Activated CD4-positive, alpha-beta T cell treated with anti-CD3 and anti-CD28 coated beads, Interleukin-2, amount 10 ng/mL, durations not matched to agents 24 days and 14 days (primary cell): ENCODE measurements at regions of chr22 and their contacts with region 1.

Region 1: DNA sequence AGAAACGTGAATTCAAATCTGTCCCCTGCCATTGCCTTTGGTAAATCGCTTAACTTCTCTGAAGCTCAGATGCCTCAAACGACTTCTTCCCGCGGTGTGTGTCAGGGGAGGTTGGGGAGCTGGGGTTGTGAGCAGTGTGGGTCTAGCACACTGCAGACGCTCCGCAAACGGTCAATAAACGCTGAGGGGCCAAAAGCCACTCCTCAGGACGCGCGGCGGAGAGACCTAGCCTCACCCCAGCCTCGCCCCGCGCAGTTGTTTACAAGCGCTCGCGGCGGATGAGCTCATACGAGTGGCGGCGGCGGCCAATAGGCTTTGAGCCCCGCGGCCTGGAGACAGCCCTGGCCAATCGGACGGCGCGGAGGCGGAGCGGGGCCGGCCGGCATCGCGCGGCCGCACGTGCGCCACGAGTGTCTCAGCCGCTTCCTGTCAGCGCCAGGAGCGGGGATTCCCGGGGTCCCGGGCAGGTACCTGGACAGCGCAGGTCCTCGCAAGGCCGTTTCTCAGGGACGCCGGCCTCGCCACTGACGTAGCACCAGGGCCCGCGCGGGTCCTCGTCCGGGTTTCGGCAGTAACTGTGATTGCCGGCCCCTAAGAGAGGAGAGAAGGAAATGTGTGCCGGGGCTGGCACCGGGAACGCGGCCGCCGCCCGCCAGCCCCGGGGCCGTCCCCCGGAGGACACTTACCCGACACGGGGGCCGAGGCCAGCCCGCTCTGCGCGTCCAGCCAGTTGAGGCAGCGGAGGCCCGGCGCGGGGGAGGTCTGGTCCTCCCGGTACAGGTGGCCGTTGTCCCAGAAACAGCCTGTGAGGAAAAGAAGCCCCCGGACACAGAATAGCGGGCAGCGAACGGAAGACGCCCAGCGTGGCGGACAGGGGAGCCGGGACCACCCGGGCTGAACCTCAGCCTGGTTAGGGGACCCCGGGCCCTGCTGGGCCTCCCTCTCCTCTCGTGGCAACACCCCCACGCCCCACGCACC is 1.5 kb downstream of the PIK3IP1 start:
- DNase-seq: peak; percentile 99
- H3K4me3 Mint-ChIP-seq: peak overlapping the region; percentile 99
- H3K27ac Mint-ChIP-seq: peak overlapping the region; percentile 100
- H3K4me1 Mint-ChIP-seq: peaks cover 64% of the 10 kb centered on the region
- H3K27me3 Mint-ChIP-seq: no peaks in the 10 kb centered on the region

Region 2: DNA sequence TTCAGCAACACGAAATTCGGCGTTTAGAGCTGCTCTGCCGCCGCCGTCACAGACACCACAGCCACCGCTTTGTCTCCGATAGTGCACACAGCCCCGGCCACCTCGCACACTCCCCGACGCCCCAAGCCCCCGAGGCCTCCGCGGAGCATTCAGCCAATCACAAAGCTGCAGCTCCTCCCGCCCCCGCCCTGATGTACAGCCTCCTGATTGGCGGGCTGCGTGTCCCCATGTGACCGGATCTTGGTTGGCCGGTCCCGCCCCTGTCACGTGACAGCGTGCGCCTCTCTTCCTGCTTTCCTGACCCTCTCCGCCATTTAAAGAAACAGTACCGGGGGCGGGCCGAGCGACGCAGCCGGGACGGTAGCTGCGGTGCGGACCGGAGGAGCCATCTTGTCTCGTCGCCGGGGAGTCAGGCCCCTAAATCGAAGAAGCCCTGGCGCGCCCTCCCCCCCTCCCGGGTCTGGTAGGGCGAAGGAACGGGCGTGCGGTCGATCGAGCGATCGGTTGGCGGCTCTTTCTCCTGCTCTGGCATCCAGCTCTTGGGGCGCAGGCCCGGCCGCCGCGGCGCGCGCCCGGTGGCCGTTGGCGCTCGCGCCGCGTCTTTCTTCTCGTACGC is 321.8 kb before region 1 on chr22 and contains the start of gene TUG1:
- intact Hi-C with region 1: loop called (anchors 5 kb)
- DNase-seq: peak; percentile 99
- H3K4me3 Mint-ChIP-seq: peak within 1 kb of the TSS; percentile 98
- H3K27ac Mint-ChIP-seq: peak within 1 kb of the TSS; percentile 99
- H3K4me1 Mint-ChIP-seq: peaks cover 39% of the 10 kb centered on the region
- H3K27me3 Mint-ChIP-seq: peaks cover 4% of the 10 kb centered on the region
- total RNA-seq, gene TUG1: 68.1 and 69.1 TPM in 2 replicates

Region 3: GRCh38 chr22:31211862-31212730 is 78.7 kb before region 1 on chr22 and contains the start of gene LIMK2:
- intact Hi-C with region 1: loop called (anchors 1 kb)
- DNase-seq: peak; percentile 99
- H3K4me3 Mint-ChIP-seq: peak within 1 kb of the TSS; percentile 88
- H3K27ac Mint-ChIP-seq: peak within 1 kb of the TSS; percentile 86
- H3K4me1 Mint-ChIP-seq: peaks cover 43% of the 10 kb centered on the region
- H3K27me3 Mint-ChIP-seq: no peaks in the 10 kb centered on the region
- total RNA-seq, gene LIMK2: 34.2 and 35.9 TPM in 2 replicates

Region 4: GRCh38 chr22:31313366-31314147 is 22.8 kb after region 1 on chr22:
- intact Hi-C with region 1: loop called (anchors 1 kb)
- DNase-seq: peak; percentile 89
- H3K4me3 Mint-ChIP-seq: no peak overlapping the region
- H3K27ac Mint-ChIP-seq: no peak overlapping the region
- H3K4me1 Mint-ChIP-seq: peaks cover 7% of the 10 kb centered on the region
- H3K27me3 Mint-ChIP-seq: no peaks in the 10 kb centered on the region

Region 5: GRCh38 chr22:31323578-31324550 is 33.1 kb after region 1 on chr22:
- intact Hi-C with region 1: no loop called
- DNase-seq: no peak
- H3K4me3 Mint-ChIP-seq: no peak overlapping the region
- H3K27ac Mint-ChIP-seq: peak overlapping the region; percentile 13
- H3K4me1 Mint-ChIP-seq: peaks cover 2% of the 10 kb centered on the region
- H3K27me3 Mint-ChIP-seq: no peaks in the 10 kb centered on the region

Region 6: DNA sequence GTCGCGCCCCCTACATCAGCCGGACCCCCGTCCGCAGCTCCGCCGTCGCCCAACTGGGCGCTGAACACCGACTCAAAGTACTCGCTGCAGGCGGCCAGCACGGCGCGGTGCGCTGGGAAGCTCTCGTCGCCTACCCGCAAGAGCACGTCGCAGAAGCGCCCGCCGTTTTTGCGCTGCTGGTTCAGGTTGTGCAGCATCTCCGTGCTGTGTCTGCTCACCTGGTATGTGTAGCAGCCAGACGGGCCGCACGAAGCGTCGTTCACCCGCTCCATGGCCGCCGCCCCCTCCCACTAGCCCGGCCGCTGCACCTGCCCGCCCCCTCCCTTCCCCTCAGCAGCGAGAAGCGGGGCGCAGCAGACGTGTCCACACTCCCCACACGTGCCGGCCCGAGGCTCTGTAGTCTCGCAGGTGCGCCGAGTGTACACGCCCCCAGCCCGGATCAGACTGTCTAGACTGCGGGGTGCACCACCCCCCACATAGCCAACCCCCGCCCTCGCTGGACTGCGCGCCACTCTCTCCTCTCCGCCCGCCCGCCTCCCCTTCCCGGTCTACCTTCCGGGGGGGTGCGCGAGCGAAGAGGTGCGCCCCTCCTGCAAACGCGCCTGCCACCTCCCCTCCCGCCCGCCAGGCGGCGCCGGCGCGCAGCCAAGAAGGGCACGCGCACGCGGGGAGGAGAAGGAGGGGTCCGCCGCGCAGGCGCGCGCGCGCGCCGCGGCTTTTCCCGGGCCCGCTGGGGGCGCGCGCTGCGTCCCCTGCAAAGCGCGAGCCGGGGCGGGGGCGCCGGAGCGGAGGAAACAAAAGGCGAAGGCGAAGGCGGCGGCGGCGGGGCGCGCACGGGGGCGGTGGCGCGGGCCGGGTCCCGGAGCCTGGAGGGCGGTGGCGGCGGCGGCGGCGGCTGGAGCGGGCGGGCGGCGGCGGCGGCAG is 54.8 kb after region 1 on chr22:
- intact Hi-C with region 1: loop called (anchors 2 kb)
- DNase-seq: peak; percentile 97
- H3K4me3 Mint-ChIP-seq: peak overlapping the region; percentile 93
- H3K27ac Mint-ChIP-seq: peak overlapping the region; percentile 92
- H3K4me1 Mint-ChIP-seq: peaks cover 37% of the 10 kb centered on the region
- H3K27me3 Mint-ChIP-seq: no peaks in the 10 kb centered on the region

Region 7: DNA sequence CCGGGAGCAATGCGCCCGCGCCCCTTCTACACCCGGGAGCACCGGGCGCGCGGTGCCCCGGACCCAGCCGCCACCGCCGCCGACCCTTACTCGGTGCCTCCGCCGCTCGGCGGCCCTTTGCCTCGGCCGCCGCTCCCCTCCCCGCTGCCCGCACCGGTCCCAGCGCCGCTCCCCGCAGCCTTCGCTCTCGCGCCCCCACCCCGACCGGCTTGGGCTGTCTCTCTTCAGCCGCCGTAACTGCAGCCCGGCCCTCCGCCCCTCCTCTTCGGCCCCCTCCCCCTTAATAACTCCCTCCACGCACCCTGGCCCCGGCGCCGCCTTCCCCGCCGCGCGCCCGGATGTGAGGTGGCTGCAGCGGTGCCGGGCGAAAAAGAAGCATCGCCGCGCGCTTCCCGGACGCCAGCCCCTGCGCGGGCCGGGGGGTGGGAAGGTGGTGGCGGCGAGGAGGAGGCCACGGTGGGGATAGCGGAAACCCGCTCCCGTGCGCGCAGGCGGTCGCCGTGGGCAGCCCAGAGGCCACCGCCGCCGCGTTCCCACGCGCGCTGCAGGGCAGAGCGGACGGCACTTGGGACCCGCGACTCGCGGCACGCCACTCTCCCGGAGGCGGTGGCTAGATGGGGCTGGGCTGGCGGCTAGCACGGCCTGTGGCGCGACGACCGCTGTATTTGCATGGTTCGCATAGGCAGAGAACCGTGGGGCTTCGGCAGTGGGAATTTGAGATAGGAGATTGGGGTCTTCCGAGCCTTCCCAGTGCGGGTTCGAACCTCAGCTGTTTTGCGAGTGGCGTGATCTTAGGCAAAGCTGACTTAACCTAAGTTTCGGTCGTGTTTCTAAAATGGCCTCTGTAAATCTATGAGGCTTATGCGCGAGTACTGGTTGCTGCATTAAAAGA is 199.1 kb after region 1 on chr22 and contains the start of gene EIF4ENIF1:
- intact Hi-C with region 1: loop called (anchors 5 kb)
- DNase-seq: peak; percentile 95
- H3K4me3 Mint-ChIP-seq: peak within 1 kb of the TSS; percentile 90
- H3K27ac Mint-ChIP-seq: peak within 1 kb of the TSS; percentile 99
- H3K4me1 Mint-ChIP-seq: peaks cover 42% of the 10 kb centered on the region
- H3K27me3 Mint-ChIP-seq: no peaks in the 10 kb centered on the region
- total RNA-seq, gene EIF4ENIF1: 78.1 and 85.6 TPM in 2 replicates

Region 8: GRCh38 chr22:31630331-31631329 is 339.8 kb after region 1 on chr22:
- intact Hi-C with region 1: loop called (anchors 5 kb)
- DNase-seq: peak; percentile 95
- H3K4me3 Mint-ChIP-seq: peak overlapping the region; percentile 90
- H3K27ac Mint-ChIP-seq: peak overlapping the region; percentile 90
- H3K4me1 Mint-ChIP-seq: peaks cover 33% of the 10 kb centered on the region
- H3K27me3 Mint-ChIP-seq: no peaks in the 10 kb centered on the region